ENCODE measurements at regions of chr12 and their contacts with region 1.

Region 1: DNA sequence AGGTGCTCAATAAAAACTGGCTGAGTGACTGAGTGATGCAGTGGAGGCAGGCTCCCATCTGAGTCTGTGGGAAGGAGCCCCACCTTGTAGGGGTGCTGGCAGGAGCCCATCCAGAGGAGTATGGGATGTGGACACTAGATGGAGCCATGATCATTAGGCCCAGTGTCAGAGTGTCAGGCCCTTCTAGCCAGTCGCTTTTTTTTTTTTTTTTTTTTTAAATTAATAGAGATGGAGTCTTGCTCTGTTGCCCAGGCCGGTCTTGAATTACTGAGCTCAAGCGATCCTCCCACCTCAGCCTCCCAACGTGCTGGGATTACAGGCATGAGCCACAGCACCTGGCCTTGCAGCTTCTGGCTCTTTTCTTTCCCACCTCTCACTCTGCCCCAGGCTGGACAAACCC is 11.5 kb downstream of the RITA1 start:
- DNase-seq: no peak
- H3K4me3 ChIP-seq: no peak overlapping the region
- H3K27ac ChIP-seq: no peak overlapping the region
- H3K4me1 ChIP-seq: peaks cover 10% of the 10 kb centered on the region
- H3K27me3 ChIP-seq: no peaks in the 10 kb centered on the region
- CTCF ChIP-seq: peak in 2 of 3 experiments; percentile 39 to 61
- POLR2A ChIP-seq: no peak

Region 2: DNA sequence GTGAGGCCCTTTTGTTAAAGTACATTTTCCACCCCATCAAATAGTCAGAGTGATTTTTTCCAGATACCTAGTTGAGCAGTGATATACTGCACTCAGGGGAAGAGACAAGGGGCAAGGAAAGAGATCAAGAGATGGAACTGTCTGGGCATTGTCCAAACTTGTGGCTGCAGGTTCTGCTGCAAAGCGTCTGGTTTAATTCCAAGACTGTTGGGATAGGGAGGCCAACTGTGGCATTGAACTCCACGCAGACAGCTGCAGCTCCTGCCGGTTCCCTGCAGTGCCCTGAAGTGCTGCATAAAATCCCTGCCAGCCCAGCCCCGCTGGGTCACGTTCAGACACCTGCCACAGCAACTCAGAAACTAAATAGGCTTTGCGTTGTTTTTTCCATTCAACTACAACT is 374.9 kb before region 1 on chr12:
- intact Hi-C with region 1: no loop called
- DNase-seq: peak in 1 of 2 donors; percentile 40
- H3K4me3 ChIP-seq: no peak overlapping the region
- H3K27ac ChIP-seq: no peak overlapping the region
- H3K4me1 ChIP-seq: no peaks in the 10 kb centered on the region
- H3K27me3 ChIP-seq: no peaks in the 10 kb centered on the region
- CTCF ChIP-seq: no peak
- POLR2A ChIP-seq: no peak

Region 3: GRCh38 chr12:113299619-113300237 is 102.7 kb after region 1 on chr12:
- intact Hi-C with region 1: loop called (anchors 10 kb)
- DNase-seq: no peak
- H3K4me3 ChIP-seq: no peak overlapping the region
- H3K27ac ChIP-seq: peak overlapping the region; percentile 78
- H3K4me1 ChIP-seq: peaks cover 30% of the 10 kb centered on the region
- H3K27me3 ChIP-seq: no peaks in the 10 kb centered on the region
- CTCF ChIP-seq: no peak
- POLR2A ChIP-seq: no peak

Region 4: DNA sequence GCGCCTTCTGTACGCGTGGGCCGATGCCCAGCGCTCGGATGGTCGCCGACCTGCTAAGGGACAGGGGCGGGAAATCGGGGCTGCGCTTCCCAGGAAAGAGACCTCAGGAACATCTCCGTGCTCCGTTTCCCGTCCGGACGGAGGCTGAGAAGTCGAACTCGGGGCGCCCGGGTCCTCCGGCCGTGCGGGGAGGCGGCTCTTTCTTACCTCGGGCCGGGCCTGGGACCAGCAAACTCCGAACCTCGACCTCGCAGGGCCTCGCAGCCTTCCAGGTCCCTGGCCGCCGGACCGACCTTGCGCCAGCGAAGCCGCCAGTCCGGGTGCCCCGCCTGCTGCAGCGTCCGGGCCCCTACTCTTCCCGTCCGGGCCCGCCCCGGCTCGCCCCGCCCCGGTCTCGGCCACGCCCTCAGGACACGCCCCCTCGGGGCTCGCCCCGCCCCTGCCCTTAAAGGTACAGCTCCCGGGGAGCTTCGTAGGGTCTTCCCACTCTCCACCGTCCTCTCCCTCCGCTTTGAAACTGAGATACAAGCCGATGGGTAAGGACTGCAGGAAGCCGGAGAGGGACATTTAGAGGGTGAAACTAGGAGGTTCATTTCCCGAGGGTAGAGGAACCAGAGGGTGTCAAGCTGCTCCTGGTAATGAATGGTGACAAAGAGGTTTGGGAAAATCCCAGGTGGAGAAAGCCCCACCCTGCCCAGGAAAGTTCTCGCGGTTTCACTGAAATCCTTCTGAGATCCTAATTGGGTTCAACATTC is 138.0 kb after region 1 on chr12 and contains the start of gene SLC8B1:
- intact Hi-C with region 1: loop called (anchors 10 kb)
- DNase-seq: peak in 1 of 2 donors; percentile 90
- H3K4me3 ChIP-seq: peak within 1 kb of the TSS; percentile 84
- H3K27ac ChIP-seq: peak within 1 kb of the TSS; percentile 72
- H3K4me1 ChIP-seq: peaks cover 27% of the 10 kb centered on the region
- H3K27me3 ChIP-seq: no peaks in the 10 kb centered on the region
- CTCF ChIP-seq: no peak
- POLR2A ChIP-seq: peak; percentile 45 to 88
- total RNA-seq, gene SLC8B1: 42.2 TPM

Measured in vagina (tissue), 2 donors.